CD8-positive, alpha-beta T cell (primary cell): ENCODE measurements at regions of chr18 and their contacts with region 1.

Region 1: GRCh38 chr18:36284671-36285295 is 12.7 kb upstream of the FHOD3 start:
- DNase-seq: peak in 8 of 9 experiments; percentile 16 to 75 (median 46)
- ATAC-seq: peak; percentile 77
- H3K4me3 ChIP-seq: no peak overlapping the region
- H3K4me3 Mint-ChIP-seq: no peak overlapping the region
- H3K27ac ChIP-seq: no peak overlapping the region
- H3K27ac Mint-ChIP-seq: no peak overlapping the region
- H3K4me1 ChIP-seq: no peaks in the 10 kb centered on the region
- H3K4me1 Mint-ChIP-seq: peaks cover 2% of the 10 kb centered on the region
- H3K27me3 ChIP-seq: no peaks in the 10 kb centered on the region
- H3K27me3 Mint-ChIP-seq: peaks cover 23% of the 10 kb centered on the region
- CTCF ChIP-seq: peak; percentile 95

Region 2: GRCh38 chr18:35756506-35757117 is 528.2 kb before region 1 on chr18:
- CTCF ChIA-PET with region 1: interaction called, 15 read pairs
- POLR2A ChIA-PET with region 1: no interaction called
- intact Hi-C with region 1: loop called in 1 of 2 experiments (anchors 1 kb)
- DNase-seq: peak in 8 of 9 experiments; percentile 35 to 64 (median 54)
- ATAC-seq: peak; percentile 40
- H3K4me3 ChIP-seq: no peak overlapping the region
- H3K4me3 Mint-ChIP-seq: no peak overlapping the region
- H3K27ac ChIP-seq: no peak overlapping the region
- H3K27ac Mint-ChIP-seq: no peak overlapping the region
- H3K4me1 ChIP-seq: no peaks in the 10 kb centered on the region
- H3K4me1 Mint-ChIP-seq: no peaks in the 10 kb centered on the region
- H3K27me3 ChIP-seq: peaks cover 0 to 8% of the 10 kb centered on the region in 2 experiments
- H3K27me3 Mint-ChIP-seq: peaks cover 24% of the 10 kb centered on the region
- CTCF ChIP-seq: peak; percentile 84

Region 3: GRCh38 chr18:36086186-36086585 is 198.6 kb before region 1 on chr18:
- CTCF ChIA-PET with region 1: interaction called, 10 read pairs
- POLR2A ChIA-PET with region 1: no interaction called
- intact Hi-C with region 1: no loop called
- DNase-seq: no peak
- ATAC-seq: no peak
- H3K4me3 ChIP-seq: no peak overlapping the region
- H3K4me3 Mint-ChIP-seq: no peak overlapping the region
- H3K27ac ChIP-seq: no peak overlapping the region
- H3K27ac Mint-ChIP-seq: no peak overlapping the region
- H3K4me1 ChIP-seq: no peaks in the 10 kb centered on the region
- H3K4me1 Mint-ChIP-seq: no peaks in the 10 kb centered on the region
- H3K27me3 ChIP-seq: no peaks in the 10 kb centered on the region
- H3K27me3 Mint-ChIP-seq: no peaks in the 10 kb centered on the region
- CTCF ChIP-seq: no peak